HepG2 (cell line): ENCODE measurements at regions of chr11 and their contacts with region 1.

Region 1: DNA sequence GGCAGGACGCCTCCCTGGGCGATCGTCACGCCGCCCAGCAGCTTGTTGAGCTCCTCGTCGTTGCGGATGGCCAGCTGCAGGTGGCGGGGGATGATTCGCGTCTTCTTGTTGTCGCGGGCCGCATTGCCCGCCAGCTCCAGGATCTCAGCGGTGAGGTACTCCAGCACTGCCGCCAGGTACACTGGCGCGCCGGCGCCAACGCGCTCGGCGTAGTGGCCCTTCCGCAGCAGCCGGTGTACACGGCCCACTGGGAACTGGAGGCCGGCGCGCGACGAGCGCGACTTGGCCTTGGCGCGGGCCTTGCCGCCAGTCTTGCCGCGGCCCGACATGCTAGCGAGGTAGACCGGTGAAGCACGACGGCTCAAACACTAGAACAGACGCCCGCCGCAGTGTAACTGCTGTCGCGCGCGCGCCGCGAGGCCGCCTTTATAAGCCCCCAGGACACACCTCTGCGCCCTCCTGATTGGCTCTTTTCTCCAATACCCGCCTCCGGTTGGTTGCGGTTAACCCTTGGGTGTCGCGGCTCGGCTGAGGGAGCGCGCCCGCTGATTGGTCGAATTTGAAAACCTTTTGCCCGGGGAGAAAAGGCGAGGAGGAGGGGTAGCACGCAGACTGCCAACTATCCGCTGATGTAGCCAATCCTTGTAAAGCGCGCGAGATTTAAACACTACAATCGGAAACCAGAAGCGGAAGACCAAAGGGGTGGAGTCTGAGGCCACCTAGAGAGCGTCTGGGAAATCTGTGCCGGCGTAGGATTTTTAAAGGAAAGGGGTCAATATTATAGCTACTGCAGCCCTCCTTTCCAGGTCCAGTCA is 6.4 kb downstream of the DPAGT1 start:
- DNase-seq: peak; percentile 99
- ATAC-seq: peak; percentile 77
- H3K4me3 ChIP-seq: peak overlapping the region; percentile 78 to 93 (median 91)
- H3K27ac ChIP-seq: peak overlapping the region; percentile 78
- H3K4me1 ChIP-seq: peaks cover 38% of the 10 kb centered on the region
- H3K27me3 ChIP-seq: no peaks in the 10 kb centered on the region
- CTCF ChIP-seq: peak; percentile 44
- EP300 ChIP-seq: peak in 1 of 2 experiments; percentile 47; a peak in 2 of 4 replicates
- POLR2A ChIP-seq: peak; percentile 100
- RAD21 ChIP-seq: peak; percentile 57; the same call in 1 of the 2 replicates

Region 2: DNA sequence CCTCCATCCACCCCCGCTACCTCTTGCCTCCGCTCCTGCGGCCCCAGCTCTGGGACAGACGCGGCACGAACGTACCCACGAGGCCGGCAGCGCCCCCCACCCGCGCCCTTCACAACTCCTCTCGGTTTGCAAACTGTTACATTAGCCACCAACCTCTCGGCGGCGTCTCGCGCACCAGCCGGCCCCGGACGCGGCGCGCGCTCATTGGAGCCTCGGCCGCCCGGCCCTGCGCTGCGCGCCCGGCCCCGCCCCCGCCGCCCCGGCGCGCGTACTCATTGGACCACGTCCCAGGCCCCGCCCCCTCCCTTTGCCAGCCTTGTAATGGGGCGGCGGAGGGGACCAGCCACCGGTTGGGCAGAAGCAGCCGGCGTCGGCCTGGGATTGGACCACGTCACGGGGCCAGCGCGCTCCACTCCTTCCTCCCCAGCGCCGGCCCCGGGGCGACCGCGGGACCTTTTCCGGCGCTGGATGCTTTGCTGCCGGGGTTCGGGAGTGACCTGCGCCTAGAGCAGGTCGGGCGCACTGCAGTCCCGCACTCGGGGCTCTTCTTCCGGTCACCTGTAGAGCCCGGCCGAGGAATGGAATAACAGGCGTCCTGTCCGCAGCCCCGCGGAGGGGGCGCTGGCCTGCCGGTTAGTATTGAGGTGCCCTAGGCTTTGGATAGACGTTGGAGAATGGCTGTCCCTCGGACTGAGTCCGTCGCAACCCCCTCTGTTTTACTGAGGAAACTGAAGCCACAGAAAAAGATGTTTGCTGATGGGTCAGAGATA is 38.1 kb before region 1 on chr11 and contains the start of gene HYOU1:
- CTCF ChIA-PET with region 1: no interaction called
- POLR2A ChIA-PET with region 1: interaction called, 8 read pairs
- in situ Hi-C with region 1: no loop called
- intact Hi-C with region 1: loop called (anchors 2 kb)
- DNase-seq: peak; percentile 93
- ATAC-seq: peak; percentile 92
- H3K4me3 ChIP-seq: peak within 1 kb of the TSS; percentile 75 to 87 (median 82)
- H3K27ac ChIP-seq: peak within 1 kb of the TSS; percentile 88
- H3K4me1 ChIP-seq: peaks cover 23% of the 10 kb centered on the region
- H3K27me3 ChIP-seq: no peaks in the 10 kb centered on the region
- CTCF ChIP-seq: peak; percentile 51; the same call in 1 of the 2 replicates
- EP300 ChIP-seq: no peak
- POLR2A ChIP-seq: peak; percentile 72 to 75
- RAD21 ChIP-seq: peak; percentile 55
- total RNA-seq, gene HYOU1: 50.0 and 127 TPM in 2 replicates

Region 3: DNA sequence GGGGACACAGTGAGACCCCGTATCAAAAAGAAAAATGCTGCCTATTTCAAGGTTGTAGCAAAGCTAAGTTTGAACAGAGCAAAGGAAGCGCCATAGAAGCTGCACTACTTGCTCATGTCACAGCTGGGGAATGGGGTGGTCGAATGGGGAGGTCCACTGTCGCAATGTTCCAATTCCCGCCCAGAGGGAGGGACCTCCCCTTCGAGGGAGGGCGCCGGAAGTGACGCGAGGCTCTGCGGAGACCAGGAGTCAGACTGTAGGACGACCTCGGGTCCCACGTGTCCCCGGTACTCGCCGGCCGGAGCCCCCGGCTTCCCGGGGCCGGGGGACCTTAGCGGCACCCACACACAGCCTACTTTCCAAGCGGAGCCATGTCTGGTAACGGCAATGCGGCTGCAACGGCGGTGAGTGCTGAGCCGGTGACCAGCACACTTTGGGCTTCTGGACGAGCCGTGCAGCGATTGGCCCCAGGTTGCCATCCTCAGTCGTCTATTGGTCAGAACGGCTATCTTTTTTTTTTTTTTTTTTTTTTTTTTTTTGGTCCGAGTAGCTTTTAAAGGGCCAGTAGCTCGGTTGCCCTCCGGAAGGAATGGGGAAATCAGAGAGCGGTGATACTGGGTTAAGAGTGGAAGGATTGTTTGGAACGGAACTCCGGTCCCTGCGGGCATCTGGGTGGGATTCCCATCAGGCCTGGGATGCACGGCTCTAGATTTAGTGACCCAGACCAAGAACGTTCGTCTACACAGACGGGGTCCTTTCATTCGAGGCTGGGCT is 10.4 kb before region 1 on chr11 and contains the start of gene HMBS:
- CTCF ChIA-PET with region 1: no interaction called
- POLR2A ChIA-PET with region 1: interaction called, 109 read pairs
- in situ Hi-C with region 1: no loop called
- intact Hi-C with region 1: no loop called
- DNase-seq: peak; percentile 92
- ATAC-seq: peak; percentile 89
- H3K4me3 ChIP-seq: peak within 1 kb of the TSS; percentile 71 to 93 (median 77)
- H3K27ac ChIP-seq: peak within 1 kb of the TSS; percentile 98
- H3K4me1 ChIP-seq: peaks cover 30% of the 10 kb centered on the region
- H3K27me3 ChIP-seq: no peaks in the 10 kb centered on the region; a peak in 1 of 5 replicates
- CTCF ChIP-seq: no peak
- EP300 ChIP-seq: no peak
- POLR2A ChIP-seq: peak; percentile 83 to 93
- RAD21 ChIP-seq: peak; percentile 45; the same call in 1 of the 2 replicates
- total RNA-seq, gene HMBS: 9.4 and 14.0 TPM in 2 replicates

Region 4: GRCh38 chr11:119121008-119121810 is 25.9 kb after region 1 on chr11 and contains the start of gene HINFP:
- CTCF ChIA-PET with region 1: no interaction called
- POLR2A ChIA-PET with region 1: interaction called, 28 read pairs
- in situ Hi-C with region 1: no loop called
- intact Hi-C with region 1: loop called (anchors 2 kb)
- DNase-seq: peak; percentile 97
- ATAC-seq: peak; percentile 98
- H3K4me3 ChIP-seq: peak within 1 kb of the TSS; percentile 81 to 98 (median 84)
- H3K27ac ChIP-seq: peak within 1 kb of the TSS; percentile 55
- H3K4me1 ChIP-seq: peaks cover 36% of the 10 kb centered on the region
- H3K27me3 ChIP-seq: no peaks in the 10 kb centered on the region; a peak in 1 of 5 replicates
- CTCF ChIP-seq: no peak; the same call in 1 of the 2 replicates
- EP300 ChIP-seq: no peak
- POLR2A ChIP-seq: peak; percentile 65 to 84
- RAD21 ChIP-seq: 0 out of 2 replicates have a peak, but pooled peaks have one; percentile 20
- total RNA-seq, gene HINFP: 13.3 and 15.1 TPM in 2 replicates